Upper lobe of right lung (tissue), 1 donor: ENCODE measurements at regions of chr4 and their contacts with region 1.

Region 1: DNA sequence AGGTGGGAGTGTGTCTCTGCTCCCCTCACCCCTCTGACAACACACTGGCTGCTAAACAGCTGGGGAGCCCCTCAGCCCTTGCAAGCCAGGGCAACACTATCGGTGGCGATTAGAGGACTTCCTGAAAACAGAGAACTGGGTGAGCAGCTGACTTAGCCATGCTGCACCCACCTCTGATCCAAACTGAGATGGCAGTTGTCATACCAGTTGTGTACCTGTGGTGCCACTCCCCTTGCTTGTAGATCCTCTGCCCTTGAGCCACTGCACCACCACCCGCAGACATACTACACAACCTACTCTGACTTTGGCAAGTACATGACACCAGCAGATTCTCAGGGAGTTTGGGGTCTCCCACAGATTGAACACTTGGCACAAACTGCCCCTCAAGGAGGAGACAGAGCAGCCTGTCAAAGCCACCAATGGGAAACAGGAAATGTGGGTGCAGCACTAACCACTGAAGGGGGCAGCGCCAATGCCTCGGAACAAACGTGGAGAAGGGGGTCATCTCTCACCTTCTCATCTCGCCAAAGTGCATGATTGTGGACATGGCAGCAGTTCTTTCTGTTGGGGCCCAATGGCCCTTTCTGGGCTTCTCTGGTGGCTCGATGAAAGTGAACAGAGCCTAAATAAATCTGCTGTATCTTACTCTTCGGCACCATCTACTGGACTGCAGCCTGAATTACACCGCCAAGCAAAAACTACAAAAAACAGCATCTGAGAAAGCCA is 119.8 kb downstream of the NEK1 start:
- DNase-seq: no peak
- ATAC-seq: peak; percentile 87
- H3K4me3 ChIP-seq: no peak overlapping the region
- H3K27ac ChIP-seq: no peak overlapping the region
- H3K4me1 ChIP-seq: no peaks in the 10 kb centered on the region
- H3K27me3 ChIP-seq: no peaks in the 10 kb centered on the region
- CTCF ChIP-seq: peak; percentile 75

Region 2: GRCh38 chr4:169024762-169025161 is 467.8 kb before region 1 on chr4:
- intact Hi-C with region 1: loop called (anchors 10 kb)
- DNase-seq: no peak
- ATAC-seq: peak; percentile 77
- H3K4me3 ChIP-seq: no peak overlapping the region
- H3K27ac ChIP-seq: no peak overlapping the region
- H3K4me1 ChIP-seq: no peaks in the 10 kb centered on the region
- H3K27me3 ChIP-seq: no peaks in the 10 kb centered on the region
- CTCF ChIP-seq: peak; percentile 63

Region 3: DNA sequence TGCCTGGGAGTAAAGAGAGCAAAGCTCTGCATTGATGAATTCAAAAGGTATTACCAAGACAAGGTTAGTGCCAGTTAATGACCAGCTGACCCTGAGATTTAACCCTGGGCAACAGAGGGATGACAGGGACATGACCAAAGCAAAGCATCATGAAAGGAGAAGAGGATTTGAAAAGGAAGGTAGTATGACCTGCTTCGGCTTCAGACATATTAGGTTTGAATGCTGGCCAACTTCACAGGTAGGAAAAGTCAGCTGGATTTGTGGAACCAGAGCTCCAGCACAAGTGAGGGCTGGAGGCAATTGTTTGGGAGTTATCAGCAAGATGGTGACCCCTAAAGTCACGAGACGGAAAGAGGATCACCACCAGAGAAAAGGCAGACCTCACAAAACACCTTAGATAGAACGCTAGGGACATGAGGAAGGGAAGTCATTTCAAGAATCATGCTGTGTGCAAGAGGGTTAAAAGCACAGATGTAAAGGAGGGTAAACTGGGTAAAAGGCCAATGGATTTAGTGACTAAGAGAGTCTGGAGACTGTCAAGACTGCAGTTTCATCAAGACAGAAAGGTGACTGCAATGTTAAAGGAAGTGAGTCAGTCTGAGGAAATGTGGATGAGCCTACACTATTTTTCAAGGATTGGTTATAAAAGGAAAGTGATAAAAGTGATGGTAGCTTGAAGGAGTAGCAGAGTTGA is 267.4 kb before region 1 on chr4:
- intact Hi-C with region 1: no loop called
- DNase-seq: no peak
- ATAC-seq: peak; percentile 54
- H3K4me3 ChIP-seq: no peak overlapping the region
- H3K27ac ChIP-seq: no peak overlapping the region
- H3K4me1 ChIP-seq: peaks cover 13% of the 10 kb centered on the region
- H3K27me3 ChIP-seq: no peaks in the 10 kb centered on the region
- CTCF ChIP-seq: no peak

Region 4: GRCh38 chr4:169286562-169287301 is 205.9 kb before region 1 on chr4:
- intact Hi-C with region 1: no loop called
- DNase-seq: no peak
- ATAC-seq: no peak
- H3K4me3 ChIP-seq: no peak overlapping the region
- H3K27ac ChIP-seq: no peak overlapping the region
- H3K4me1 ChIP-seq: no peaks in the 10 kb centered on the region
- H3K27me3 ChIP-seq: no peaks in the 10 kb centered on the region
- CTCF ChIP-seq: peak; percentile 17